H1 (cell line): ENCODE measurements at regions of chr22 and their contacts with region 1.

Region 1: DNA sequence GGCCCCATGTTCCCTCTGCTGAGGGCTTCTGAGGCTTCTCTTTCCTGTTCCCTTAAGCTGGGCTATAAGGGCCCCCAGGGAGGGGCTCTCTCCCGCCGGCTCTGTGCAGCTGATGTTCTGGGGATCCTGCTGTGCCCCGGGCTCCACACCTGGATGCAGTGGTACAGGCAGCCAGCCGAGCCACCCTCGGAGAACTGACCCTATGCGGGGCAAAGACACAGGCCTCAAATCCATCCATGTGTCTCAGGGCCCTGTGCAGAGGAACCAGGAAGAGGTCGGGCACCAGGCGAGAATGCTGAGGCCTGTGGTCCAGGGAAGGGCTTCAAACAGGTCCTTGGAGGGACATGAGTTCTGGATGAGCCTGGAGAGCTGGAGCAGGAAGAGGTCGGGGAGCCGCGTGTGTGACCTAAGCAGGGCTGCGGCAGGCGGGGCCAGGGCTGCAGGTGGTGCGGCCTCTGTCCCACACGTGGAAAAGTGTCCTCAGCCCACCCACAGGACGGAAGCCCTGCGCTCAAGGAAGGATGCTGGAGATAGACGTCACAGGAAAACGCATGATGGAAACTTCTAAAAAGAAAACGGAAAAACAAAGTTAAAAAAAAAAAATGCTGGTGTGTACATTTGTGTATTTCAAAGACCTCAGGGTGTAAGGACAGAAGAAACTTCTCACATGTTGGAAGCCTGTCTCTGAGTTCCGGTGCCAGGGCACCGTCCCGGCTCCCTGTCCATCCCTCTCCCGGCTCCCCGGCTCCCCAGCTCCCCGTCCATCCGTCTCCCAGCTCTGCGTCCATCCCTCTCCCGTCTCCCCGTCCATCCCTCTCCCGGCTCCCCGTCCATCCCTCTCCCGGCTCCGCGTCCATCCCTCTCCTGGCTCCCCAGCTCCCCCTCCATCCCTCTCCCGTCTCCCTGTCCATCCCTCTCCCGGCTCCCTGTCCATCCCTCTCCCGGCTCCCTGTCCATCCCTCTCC is 1149.2 kb downstream of the BRD1 start:
- DNase-seq: no peak
- H3K4me3 ChIP-seq: no peak overlapping the region
- H3K27ac ChIP-seq: no peak overlapping the region
- H3K4me1 ChIP-seq: peaks cover 0 to 2% (median 0%) of the 10 kb centered on the region in 4 experiments; a peak in 1 of 7 replicates
- H3K27me3 ChIP-seq: no peaks in the 10 kb centered on the region
- CTCF ChIP-seq: no peak
- EP300 ChIP-seq: no peak
- POLR2A ChIP-seq: no peak
- RAD21 ChIP-seq: no peak

Region 2: DNA sequence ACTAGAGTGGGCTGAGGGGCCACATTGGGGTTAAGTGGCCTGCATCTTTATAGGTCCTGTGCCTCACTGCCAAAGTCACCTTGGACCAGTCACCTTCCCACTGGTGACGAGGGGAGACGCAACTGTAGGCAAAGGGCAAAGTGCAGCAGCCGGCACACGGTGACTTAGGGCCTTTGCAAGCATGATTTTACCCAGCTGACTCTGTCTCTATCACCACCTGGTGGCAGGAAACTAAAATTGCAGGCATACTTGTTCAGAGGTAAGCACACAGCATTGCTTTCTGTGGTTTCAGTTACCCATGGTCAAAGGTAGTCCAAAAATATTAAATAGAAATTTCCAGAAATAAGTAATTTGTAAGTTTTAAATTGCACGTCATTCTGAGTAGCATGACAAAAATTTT is 15.2 kb before region 1 on chr22:
- CTCF ChIA-PET with region 1: interaction called, 12 read pairs
- POLR2A ChIA-PET with region 1: interaction called, 4 read pairs
- DNase-seq: no peak
- H3K4me3 ChIP-seq: no peak overlapping the region
- H3K27ac ChIP-seq: no peak overlapping the region
- H3K4me1 ChIP-seq: no peaks in the 10 kb centered on the region; a peak in 1 of 7 replicates
- H3K27me3 ChIP-seq: no peaks in the 10 kb centered on the region
- CTCF ChIP-seq: peak; percentile 44 to 88 (median 73)
- EP300 ChIP-seq: no peak
- POLR2A ChIP-seq: no peak
- RAD21 ChIP-seq: peak; percentile 78 to 80